ENCODE measurements at regions of chr11 and their contacts with region 1.

Region 1: GRCh38 chr11:83156150-83156995 is 558 bp upstream of the PCF11 start:
- DNase-seq: peak; percentile 96
- H3K4me3 Mint-ChIP-seq: peak overlapping the region; percentile 99
- H3K27ac Mint-ChIP-seq: peak overlapping the region; percentile 100
- H3K4me1 Mint-ChIP-seq: peaks cover 24% of the 10 kb centered on the region
- H3K27me3 Mint-ChIP-seq: no peaks in the 10 kb centered on the region

Region 2: GRCh38 chr11:82978422-82979099 is 177.8 kb before region 1 on chr11:
- intact Hi-C with region 1: loop called (anchors 2 kb)
- DNase-seq: no peak
- H3K4me3 Mint-ChIP-seq: peak overlapping the region; percentile 9
- H3K27ac Mint-ChIP-seq: peak overlapping the region; percentile 73
- H3K4me1 Mint-ChIP-seq: peaks cover 42% of the 10 kb centered on the region
- H3K27me3 Mint-ChIP-seq: no peaks in the 10 kb centered on the region

Region 3: GRCh38 chr11:83007909-83008580 is 148.3 kb before region 1 on chr11:
- intact Hi-C with region 1: loop called (anchors 2 kb)
- DNase-seq: no peak
- H3K4me3 Mint-ChIP-seq: peak overlapping the region; percentile 61
- H3K27ac Mint-ChIP-seq: peak overlapping the region; percentile 65
- H3K4me1 Mint-ChIP-seq: peaks cover 47% of the 10 kb centered on the region
- H3K27me3 Mint-ChIP-seq: no peaks in the 10 kb centered on the region

Region 4: GRCh38 chr11:83115551-83115950 is 40.8 kb before region 1 on chr11:
- intact Hi-C with region 1: loop called (anchors 2 kb)
- DNase-seq: no peak
- H3K4me3 Mint-ChIP-seq: no peak overlapping the region
- H3K27ac Mint-ChIP-seq: no peak overlapping the region
- H3K4me1 Mint-ChIP-seq: peaks cover 35% of the 10 kb centered on the region
- H3K27me3 Mint-ChIP-seq: no peaks in the 10 kb centered on the region

Region 5: GRCh38 chr11:83193315-83194280 is 37.2 kb after region 1 on chr11 and contains the start of gene ANKRD42:
- intact Hi-C with region 1: loop called (anchors 1 kb)
- DNase-seq: peak; percentile 82
- H3K4me3 Mint-ChIP-seq: peak within 1 kb of the TSS; percentile 99
- H3K27ac Mint-ChIP-seq: peak within 1 kb of the TSS; percentile 92
- H3K4me1 Mint-ChIP-seq: peaks cover 21% of the 10 kb centered on the region
- H3K27me3 Mint-ChIP-seq: no peaks in the 10 kb centered on the region
- total RNA-seq, gene ANKRD42: 3.7 TPM in 2 replicates

Region 6: DNA sequence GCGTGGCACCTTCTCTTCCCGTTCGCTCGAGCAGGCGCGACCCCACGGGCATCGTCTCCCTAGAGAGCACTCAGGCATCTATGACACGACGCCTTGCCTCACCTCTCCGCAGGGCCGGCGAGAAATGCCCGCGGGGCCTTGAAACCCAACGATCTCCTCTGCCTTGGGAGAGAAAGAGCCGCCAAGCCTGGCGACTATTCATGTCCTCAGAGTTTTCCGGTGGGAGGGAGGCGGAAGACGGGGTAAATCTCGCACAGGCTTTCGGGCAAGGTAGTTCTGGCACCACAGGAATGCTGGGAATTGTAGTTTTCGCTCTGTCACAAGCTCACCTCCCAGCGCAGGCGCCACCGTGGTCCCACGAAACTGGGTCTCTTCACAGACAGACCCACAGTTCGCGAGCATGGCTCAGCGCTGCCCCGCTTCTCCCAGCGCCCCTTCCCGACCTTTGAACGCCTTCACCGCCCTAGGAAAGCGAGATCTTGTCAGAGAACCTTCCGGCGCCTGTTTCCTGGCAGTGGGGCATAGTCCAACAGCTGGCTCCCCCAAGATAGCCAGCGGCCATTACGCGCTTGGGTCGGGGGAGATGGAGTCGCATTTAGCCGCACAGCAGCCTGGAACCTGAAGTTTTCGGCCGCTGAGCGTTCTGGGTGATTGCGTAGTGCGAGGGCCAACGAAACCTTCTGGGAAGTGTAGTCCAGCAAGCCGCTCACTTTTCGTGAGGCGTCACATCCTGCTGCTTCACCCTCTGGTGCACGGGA is 129.6 kb after region 1 on chr11 and contains the start of gene CCDC90B:
- intact Hi-C with region 1: loop called (anchors 2 kb)
- DNase-seq: peak; percentile 91
- H3K4me3 Mint-ChIP-seq: peak within 1 kb of the TSS; percentile 89
- H3K27ac Mint-ChIP-seq: peak within 1 kb of the TSS; percentile 96
- H3K4me1 Mint-ChIP-seq: peaks cover 26% of the 10 kb centered on the region
- H3K27me3 Mint-ChIP-seq: peaks cover 3% of the 10 kb centered on the region
- total RNA-seq, gene CCDC90B: 25.4 and 27.2 TPM in 2 replicates

Measured in activated T-helper 2 cell treated with anti-CD3 and anti-CD28 coated beads, Interferon-gamma antibody, Interleukin-2, Interleukin-4, amounts not matched to agents 10 μg/mL and 5 μg/mL and 100 μg/mL, durations not matched to agents 14 hours and 24 hours and 36 hours (primary cell).